ENCODE measurements at regions of chr7 and their contacts with region 1.

Region 1: DNA sequence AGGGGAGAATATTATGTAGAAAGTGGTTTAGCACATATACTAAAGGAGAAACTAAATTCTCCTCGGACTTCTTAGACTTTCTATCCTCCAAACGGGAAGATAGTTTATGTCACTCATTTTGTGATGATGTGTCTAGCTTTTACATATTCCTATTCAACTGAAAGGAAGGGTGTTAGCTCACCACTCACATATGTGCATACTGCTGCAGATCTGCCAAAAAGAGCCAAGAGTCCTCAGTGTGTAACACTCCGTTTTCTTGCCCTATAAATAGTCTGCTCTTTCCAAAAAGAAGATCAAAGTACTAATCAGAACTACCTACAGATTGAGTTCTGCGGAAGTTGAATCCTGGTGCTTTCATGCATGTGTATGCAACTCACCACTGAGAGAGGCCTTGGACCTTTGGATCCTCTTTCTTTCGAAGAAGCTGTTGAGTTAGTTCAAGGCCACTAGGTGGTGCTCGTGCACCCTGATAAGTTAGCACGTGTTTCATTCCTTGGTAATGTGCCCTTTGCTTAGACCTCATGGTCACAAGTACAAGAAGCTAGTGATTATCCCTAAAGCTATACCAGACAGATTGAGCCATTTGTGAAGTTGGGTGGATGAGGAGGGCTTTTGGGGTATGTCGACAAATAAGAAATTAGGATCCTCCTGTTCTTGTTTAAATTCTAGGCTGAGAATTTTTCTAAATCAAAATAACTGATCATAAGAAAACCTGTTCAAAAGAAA is 14.1 kb downstream of the YAE1 start:
- DNase-seq: peak; percentile 97
- ATAC-seq: peak; percentile 98
- H3K4me3 ChIP-seq: no peak overlapping the region
- H3K27ac ChIP-seq: no peak overlapping the region
- H3K4me1 ChIP-seq: no peaks in the 10 kb centered on the region
- H3K27me3 ChIP-seq: no peaks in the 10 kb centered on the region
- CTCF ChIP-seq: peak; percentile 90
- POLR2A ChIP-seq: peak; percentile 38; the same call in 1 of the 2 replicates
- RAD21 ChIP-seq: peak; percentile 98

Region 2: GRCh38 chr7:39683216-39683845 is 103.0 kb after region 1 on chr7:
- CTCF ChIA-PET with region 1: no interaction called
- POLR2A ChIA-PET with region 1: no interaction called
- dilution Hi-C with region 1: no loop called
- in situ Hi-C with region 1: no loop called
- intact Hi-C with region 1: loop called (anchors 5 kb)
- DNase-seq: peak; percentile 75
- ATAC-seq: peak; percentile 74
- H3K4me3 ChIP-seq: no peak overlapping the region
- H3K27ac ChIP-seq: peak overlapping the region; percentile 73; the same call in 1 of the 2 replicates
- H3K4me1 ChIP-seq: peaks cover 28% of the 10 kb centered on the region
- H3K27me3 ChIP-seq: no peaks in the 10 kb centered on the region
- CTCF ChIP-seq: no peak
- POLR2A ChIP-seq: no peak
- RAD21 ChIP-seq: no peak

Region 3: GRCh38 chr7:39746103-39746819 is 165.9 kb after region 1 on chr7:
- CTCF ChIA-PET with region 1: interaction called, 90 read pairs
- POLR2A ChIA-PET with region 1: interaction called, 3 read pairs
- dilution Hi-C with region 1: no loop called
- in situ Hi-C with region 1: loop called (anchors 5 kb)
- intact Hi-C with region 1: loop called (anchors 1 kb)
- DNase-seq: peak; percentile 83
- ATAC-seq: peak; percentile 78
- H3K4me3 ChIP-seq: no peak overlapping the region
- H3K27ac ChIP-seq: no peak overlapping the region
- H3K4me1 ChIP-seq: peaks cover 7% of the 10 kb centered on the region
- H3K27me3 ChIP-seq: no peaks in the 10 kb centered on the region
- CTCF ChIP-seq: peak; percentile 90
- POLR2A ChIP-seq: no peak
- RAD21 ChIP-seq: peak; percentile 95

Measured in IMR-90 (cell line).